ENCODE measurements at regions of chr13 and their contacts with region 1.

Region 1: DNA sequence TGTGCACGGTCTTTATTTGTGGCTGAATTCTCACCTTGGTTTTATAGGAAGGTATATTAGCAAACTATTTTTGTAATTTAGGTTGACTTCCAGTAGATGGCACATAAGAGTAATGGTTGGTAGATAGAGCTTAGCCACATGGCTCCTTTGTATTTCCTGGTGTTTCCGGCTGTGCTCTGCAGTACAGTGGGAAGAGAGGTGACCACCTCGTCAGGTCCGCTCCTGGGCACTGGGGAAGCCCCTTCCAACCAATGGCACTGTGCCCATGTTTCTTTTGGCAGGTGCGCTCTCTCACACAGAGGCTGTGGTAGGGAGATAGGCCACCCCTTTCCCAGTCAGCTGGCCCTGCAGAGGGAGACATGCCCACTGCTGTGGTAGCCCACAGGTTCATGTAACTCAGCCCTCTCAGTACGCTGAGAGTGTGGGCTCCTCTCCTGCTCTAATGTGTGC is 74.3 kb upstream of the ATP12A start:
- DNase-seq: peak in 2 of 3 donors; percentile 39 to 80
- H3K4me3 ChIP-seq: no peak overlapping the region
- H3K27ac ChIP-seq: no peak overlapping the region
- H3K4me1 ChIP-seq: peaks cover 0 to 7% (median 5%) of the 10 kb centered on the region in 4 experiments
- H3K27me3 ChIP-seq: no peaks in the 10 kb centered on the region

Region 2: GRCh38 chr13:24625870-24626849 is 20.2 kb after region 1 on chr13:
- CTCF ChIA-PET with region 1: interaction called, 26 read pairs
- POLR2A ChIA-PET with region 1: no interaction called
- DNase-seq: peak in 1 of 3 donors; percentile 3
- H3K4me3 ChIP-seq: no peak overlapping the region
- H3K27ac ChIP-seq: no peak overlapping the region
- H3K4me1 ChIP-seq: peaks cover 3 to 33% (median 8%) of the 10 kb centered on the region in 4 experiments
- H3K27me3 ChIP-seq: no peaks in the 10 kb centered on the region

Region 3: GRCh38 chr13:25203127-25203740 is 597.3 kb after region 1 on chr13:
- CTCF ChIA-PET with region 1: no interaction called
- POLR2A ChIA-PET with region 1: no interaction called
- DNase-seq: no peak
- H3K4me3 ChIP-seq: no peak overlapping the region
- H3K27ac ChIP-seq: no peak overlapping the region
- H3K4me1 ChIP-seq: no peaks in the 10 kb centered on the region
- H3K27me3 ChIP-seq: peaks cover 0 to 49% (median 11%) of the 10 kb centered on the region in 5 experiments